Gastrocnemius medialis (tissue), 4 donors: ENCODE measurements at regions of chr11 and their contacts with region 1.

Region 1: DNA sequence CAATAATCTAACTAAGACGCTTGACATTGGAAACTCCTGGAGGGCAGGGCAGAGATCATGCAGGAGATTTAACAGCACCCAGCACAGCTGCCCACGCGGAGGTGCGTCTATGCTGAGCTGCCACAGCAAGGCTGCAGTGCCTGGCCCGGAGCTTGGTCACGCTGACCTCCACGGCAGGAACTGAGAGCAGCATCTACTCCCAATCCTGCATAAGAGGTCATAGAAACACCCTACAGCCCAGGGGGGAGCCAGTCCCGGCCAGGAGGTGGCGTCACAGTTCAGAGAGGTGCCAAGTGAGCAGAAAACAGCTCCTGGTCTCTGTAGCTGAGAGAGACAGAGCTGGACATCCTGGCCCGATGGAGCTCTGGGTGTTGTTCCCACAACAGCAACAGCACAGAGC is 121.1 kb upstream of the TMEM45B start:
- DNase-seq: no peak
- ATAC-seq: no peak
- H3K4me3 ChIP-seq: no peak overlapping the region
- H3K27ac ChIP-seq: no peak overlapping the region
- H3K4me1 ChIP-seq: no peaks in the 10 kb centered on the region
- H3K27me3 ChIP-seq: no peaks in the 10 kb centered on the region
- CTCF ChIP-seq: no peak
- POLR2A ChIP-seq: no peak

Region 2: DNA sequence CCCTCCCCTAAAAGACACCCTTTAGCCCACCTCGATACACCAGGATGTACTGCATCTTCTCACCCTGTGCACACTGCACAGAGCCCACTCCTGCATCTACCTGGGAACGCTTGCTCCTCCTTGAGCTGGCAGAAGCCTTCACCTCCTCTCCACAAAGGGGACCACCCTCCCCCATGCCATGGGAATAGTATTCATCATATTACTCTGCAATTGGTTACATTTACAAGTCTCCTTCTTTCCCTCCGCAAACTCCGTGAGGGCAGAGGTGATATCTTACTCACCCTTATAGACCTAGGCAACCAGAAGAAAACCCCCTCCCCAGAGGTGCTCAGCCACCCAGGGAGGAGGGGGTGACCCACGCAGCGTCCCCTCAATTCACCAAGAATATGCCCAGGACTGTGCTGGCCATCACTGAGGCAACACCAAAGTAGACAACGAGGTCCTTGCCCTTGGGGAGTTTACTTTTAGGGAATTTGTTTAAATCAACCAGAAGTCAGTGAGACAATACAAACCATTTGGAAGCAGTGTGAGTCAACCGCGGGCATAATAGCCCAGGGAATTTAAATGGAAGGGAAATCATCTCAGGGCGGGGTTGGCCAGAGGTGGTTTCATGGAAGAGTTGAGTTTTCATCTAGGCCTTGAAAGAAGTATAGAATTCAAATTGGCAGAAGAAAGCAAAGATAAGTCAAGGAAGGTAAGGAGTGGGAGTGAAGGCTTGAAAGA is 104.3 kb before region 1 on chr11:
- in situ Hi-C with region 1: no loop called
- intact Hi-C with region 1: loop called (anchors 2 kb)
- DNase-seq: no peak
- ATAC-seq: no peak
- H3K4me3 ChIP-seq: no peak overlapping the region
- H3K27ac ChIP-seq: no peak overlapping the region
- H3K4me1 ChIP-seq: no peaks in the 10 kb centered on the region
- H3K27me3 ChIP-seq: no peaks in the 10 kb centered on the region
- CTCF ChIP-seq: no peak
- POLR2A ChIP-seq: no peak

Region 3: DNA sequence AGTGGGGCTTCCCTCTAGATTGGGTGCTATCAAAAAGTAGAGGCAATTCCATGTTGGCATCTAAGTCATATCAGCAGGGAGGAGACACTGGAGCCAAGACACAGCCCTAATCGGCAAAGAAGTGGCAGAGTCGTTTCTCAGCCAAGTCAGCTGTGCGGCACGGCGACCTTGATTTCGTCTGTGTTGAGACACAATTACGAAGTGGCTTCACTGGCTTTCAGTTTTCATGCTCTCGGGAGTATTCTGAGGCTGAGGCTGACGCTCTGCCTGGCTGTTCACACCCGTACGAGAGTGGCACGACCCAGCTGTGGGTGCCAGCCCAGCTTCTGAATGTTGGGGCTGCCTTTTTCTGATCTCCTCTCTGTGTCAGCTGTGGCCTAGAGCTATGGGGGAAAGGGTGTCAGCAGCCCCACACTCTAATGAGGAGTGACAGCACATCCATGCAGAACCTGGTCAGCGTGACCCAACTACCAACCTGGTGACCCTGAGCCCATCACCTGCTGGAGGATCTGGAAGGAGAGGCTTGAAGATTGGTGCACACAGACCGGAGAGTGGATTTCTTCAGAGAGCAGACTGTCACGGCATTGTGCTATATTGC is 15.4 kb after region 1 on chr11:
- in situ Hi-C with region 1: no loop called
- intact Hi-C with region 1: no loop called
- DNase-seq: no peak
- ATAC-seq: no peak
- H3K4me3 ChIP-seq: no peak overlapping the region
- H3K27ac ChIP-seq: no peak overlapping the region
- H3K4me1 ChIP-seq: no peaks in the 10 kb centered on the region
- H3K27me3 ChIP-seq: no peaks in the 10 kb centered on the region
- CTCF ChIP-seq: no peak
- POLR2A ChIP-seq: no peak